ENCODE measurements at regions of chr17 and their contacts with region 1.

Region 1: GRCh38 chr17:39235555-39236449 is 10.1 kb upstream of the STAC2 start:
- DNase-seq: peak; percentile 18 to 38 (median 37)
- H3K4me3 ChIP-seq: no peak overlapping the region
- H3K4me3 Mint-ChIP-seq: no peak overlapping the region
- H3K27ac ChIP-seq: no peak overlapping the region
- H3K27ac Mint-ChIP-seq: no peak overlapping the region
- H3K4me1 ChIP-seq: peaks cover 16 to 22% of the 10 kb centered on the region in 2 donors
- H3K4me1 Mint-ChIP-seq: peaks cover 32% of the 10 kb centered on the region
- H3K27me3 ChIP-seq: peaks cover 0 to 25% of the 10 kb centered on the region in 2 donors
- H3K27me3 Mint-ChIP-seq: peaks cover 11 to 37% (median 24%) of the 10 kb centered on the region in 3 donors
- CTCF ChIP-seq: peak; percentile 78

Region 2: DNA sequence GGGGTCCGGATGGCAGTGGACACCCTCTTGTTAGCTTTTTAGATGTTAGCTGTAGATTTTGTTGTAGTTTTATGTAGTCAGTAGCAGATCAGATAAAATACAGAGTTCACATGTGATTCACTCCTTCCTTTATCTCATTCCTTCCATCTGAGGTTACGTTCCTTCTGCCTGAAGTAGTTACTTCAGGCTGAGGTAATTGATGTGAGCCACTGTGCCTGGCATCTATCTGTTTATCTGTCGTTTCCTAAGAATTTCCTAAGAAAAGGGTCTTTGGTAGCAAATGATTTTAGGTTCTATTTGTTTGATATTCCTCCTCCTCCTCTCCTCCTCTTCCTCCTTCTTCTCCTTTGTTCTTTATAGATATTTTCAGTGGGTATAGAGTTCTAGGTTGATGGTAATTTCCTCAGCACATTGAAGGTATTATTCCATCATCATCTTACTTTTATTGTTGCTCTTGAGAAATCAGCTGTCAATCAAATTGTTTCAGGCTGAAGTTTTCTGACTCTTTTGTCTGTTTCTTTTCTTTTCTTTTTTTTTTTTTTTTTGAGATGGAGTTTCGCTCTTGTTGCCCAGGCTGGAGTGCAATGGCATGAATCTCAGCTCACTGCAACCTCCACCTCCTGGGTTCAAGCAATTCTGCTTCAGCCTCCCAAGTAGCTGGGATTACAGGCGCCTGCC is 239.0 kb before region 1 on chr17:
- intact Hi-C with region 1: loop called in 1 of 2 experiments (anchors 10 kb)
- DNase-seq: no peak
- H3K4me3 ChIP-seq: no peak overlapping the region
- H3K4me3 Mint-ChIP-seq: no peak overlapping the region
- H3K27ac ChIP-seq: no peak overlapping the region
- H3K27ac Mint-ChIP-seq: no peak overlapping the region
- H3K4me1 ChIP-seq: peaks cover 7 to 10% of the 10 kb centered on the region in 2 donors
- H3K4me1 Mint-ChIP-seq: peaks cover 17% of the 10 kb centered on the region
- H3K27me3 ChIP-seq: no peaks in the 10 kb centered on the region
- H3K27me3 Mint-ChIP-seq: peaks cover 0 to 2% (median 2%) of the 10 kb centered on the region in 3 donors
- CTCF ChIP-seq: no peak

Region 3: DNA sequence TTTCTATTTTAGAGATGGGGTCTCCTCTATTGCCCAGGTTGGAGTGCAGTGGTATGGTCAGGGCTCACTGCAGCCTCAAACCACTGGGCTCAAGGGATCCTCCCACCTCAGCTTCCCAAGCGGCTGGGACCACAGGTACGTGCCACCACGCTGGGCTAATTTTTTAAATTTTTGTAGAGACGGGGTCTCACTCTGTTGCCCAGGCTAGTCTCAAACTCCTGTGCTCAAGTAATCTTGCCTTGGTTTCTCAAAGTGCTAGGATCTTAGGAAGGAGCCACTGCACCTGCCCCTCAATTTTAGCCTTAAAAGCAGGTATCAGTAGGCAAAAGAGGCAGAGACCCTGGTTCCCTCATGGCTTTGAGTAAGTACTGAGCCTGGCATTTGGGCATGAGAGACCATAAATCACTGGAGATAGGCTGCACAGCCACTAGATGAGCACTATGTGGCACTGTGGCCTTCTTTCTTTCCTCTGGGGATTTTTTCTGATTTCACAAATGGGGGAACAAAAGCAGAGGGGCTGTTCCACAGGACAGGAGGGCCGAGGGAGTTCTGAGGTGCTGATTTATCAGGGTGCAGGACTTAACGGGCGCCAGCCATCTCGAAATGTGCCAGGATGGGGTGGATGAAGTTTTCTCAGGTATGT is 166.6 kb before region 1 on chr17:
- intact Hi-C with region 1: loop called in 1 of 2 experiments (anchors 5 kb)
- DNase-seq: peak; percentile 21 to 59 (median 53)
- H3K4me3 ChIP-seq: no peak overlapping the region
- H3K4me3 Mint-ChIP-seq: peak overlapping the region in 1 of 2 donors; percentile 30
- H3K27ac ChIP-seq: no peak overlapping the region
- H3K27ac Mint-ChIP-seq: peak overlapping the region in 2 of 7 donors; percentile 47 to 74
- H3K4me1 ChIP-seq: peaks cover 0 to 4% of the 10 kb centered on the region in 2 donors
- H3K4me1 Mint-ChIP-seq: peaks cover 7% of the 10 kb centered on the region
- H3K27me3 ChIP-seq: no peaks in the 10 kb centered on the region
- H3K27me3 Mint-ChIP-seq: peaks cover 3 to 6% (median 5%) of the 10 kb centered on the region in 3 donors
- CTCF ChIP-seq: peak; percentile 60

Region 4: DNA sequence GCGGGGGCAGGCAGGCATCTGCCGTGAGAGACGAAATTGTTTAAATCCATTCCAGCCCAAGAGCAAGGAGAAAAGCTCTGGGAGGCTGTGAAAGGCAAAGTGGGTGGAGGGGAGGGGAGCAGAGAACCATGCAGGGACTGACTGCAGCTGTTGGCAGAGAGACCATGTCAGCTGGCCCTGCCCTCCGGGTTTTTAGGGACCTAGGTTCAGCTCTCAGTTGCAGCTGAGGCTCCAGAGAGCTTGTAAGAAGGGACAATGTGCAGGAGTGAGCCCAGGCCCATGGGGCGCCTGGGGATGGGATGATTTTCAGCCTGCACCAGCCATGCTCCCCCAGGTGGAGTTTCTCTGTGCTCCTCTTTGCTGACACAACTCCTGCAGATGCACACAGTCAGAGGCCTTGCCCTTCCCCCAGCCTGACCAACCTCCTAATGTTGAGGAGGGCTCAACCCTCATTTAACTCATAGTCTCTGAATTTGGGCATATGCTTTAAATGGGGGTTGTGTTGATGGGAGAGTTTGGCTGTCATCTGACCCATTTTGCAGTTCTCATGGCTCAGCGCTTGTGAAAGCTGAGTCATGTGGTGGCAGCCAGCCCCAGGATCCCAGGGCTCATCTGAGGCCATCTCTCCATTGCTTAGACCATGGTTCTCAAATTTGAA is 155.3 kb before region 1 on chr17:
- intact Hi-C with region 1: loop called in 1 of 2 experiments (anchors 10 kb)
- DNase-seq: no peak
- H3K4me3 ChIP-seq: no peak overlapping the region
- H3K4me3 Mint-ChIP-seq: no peak overlapping the region
- H3K27ac ChIP-seq: no peak overlapping the region
- H3K27ac Mint-ChIP-seq: no peak overlapping the region
- H3K4me1 ChIP-seq: no peaks in the 10 kb centered on the region
- H3K4me1 Mint-ChIP-seq: no peaks in the 10 kb centered on the region
- H3K27me3 ChIP-seq: no peaks in the 10 kb centered on the region
- H3K27me3 Mint-ChIP-seq: peaks cover 2 to 8% (median 5%) of the 10 kb centered on the region in 3 donors
- CTCF ChIP-seq: no peak

Region 5: DNA sequence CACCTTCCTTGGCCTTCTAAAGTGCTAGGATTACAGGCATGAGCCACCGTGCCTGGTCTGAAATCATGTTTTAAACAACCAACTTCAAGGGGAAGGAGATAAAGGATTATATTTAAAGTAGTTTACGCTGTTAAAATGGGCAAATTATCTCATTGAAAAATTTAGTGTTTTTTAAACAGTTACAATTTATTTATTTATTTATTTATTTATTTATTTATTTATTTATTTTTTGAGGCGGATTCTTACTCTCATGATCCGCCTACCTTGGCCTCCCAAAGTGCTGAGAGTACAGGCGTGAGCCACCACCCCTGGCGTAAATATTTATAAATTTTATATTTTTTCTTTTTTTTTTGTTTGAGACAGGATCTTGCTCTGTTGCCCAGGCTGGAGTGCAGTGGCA is 247.7 kb after region 1 on chr17:
- intact Hi-C with region 1: no loop called
- DNase-seq: no peak
- H3K4me3 ChIP-seq: no peak overlapping the region
- H3K4me3 Mint-ChIP-seq: no peak overlapping the region
- H3K27ac ChIP-seq: no peak overlapping the region
- H3K27ac Mint-ChIP-seq: peak overlapping the region in 1 of 7 donors; percentile 21
- H3K4me1 ChIP-seq: no peaks in the 10 kb centered on the region
- H3K4me1 Mint-ChIP-seq: no peaks in the 10 kb centered on the region
- H3K27me3 ChIP-seq: no peaks in the 10 kb centered on the region
- H3K27me3 Mint-ChIP-seq: no peaks in the 10 kb centered on the region
- CTCF ChIP-seq: no peak

Measured in CD14-positive monocyte (primary cell).